Activated CD4-positive, alpha-beta T cell treated with anti-CD3 and anti-CD28 coated beads for 36 hours (primary cell): ENCODE measurements at regions of chr18 and their contacts with region 1.

Region 1: GRCh38 chr18:21997207-21998143 is 171.9 kb upstream of the GATA6 start:
- DNase-seq: no peak
- ATAC-seq: peak; percentile 47
- H3K4me3 Mint-ChIP-seq: no peak overlapping the region
- H3K27ac Mint-ChIP-seq: no peak overlapping the region
- H3K4me1 Mint-ChIP-seq: peaks cover 3% of the 10 kb centered on the region
- H3K27me3 Mint-ChIP-seq: no peaks in the 10 kb centered on the region

Region 2: DNA sequence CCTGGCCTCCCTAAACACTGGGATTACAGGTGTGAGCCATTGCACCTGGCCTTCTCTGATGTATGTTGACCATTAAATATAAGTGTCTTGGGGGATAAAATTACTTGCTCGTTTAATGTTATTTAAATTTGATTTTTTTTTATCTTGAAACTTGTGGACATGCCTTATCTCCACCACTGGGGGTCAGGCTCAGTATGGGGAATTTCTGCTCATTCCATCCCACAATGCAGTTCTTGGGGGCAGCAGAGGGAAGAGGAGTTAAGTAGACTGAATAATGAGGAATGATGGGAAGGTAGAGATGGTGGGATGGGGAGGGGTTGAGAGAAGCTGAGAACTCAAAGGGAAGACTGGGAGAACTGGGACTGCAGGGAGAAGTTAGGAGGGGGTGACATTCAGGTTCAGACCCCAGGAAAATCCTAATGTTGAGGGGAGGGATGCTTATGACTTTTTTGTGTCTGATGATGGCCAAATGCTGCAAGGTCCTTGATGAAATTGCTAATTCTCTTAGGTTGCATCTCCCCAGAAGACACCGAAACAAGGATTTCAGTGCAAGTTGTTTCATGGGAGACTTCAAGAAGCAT is 82.6 kb before region 1 on chr18:
- CTCF ChIA-PET with region 1: no interaction called
- POLR2A ChIA-PET with region 1: no interaction called
- intact Hi-C with region 1: no loop called
- DNase-seq: no peak
- ATAC-seq: no peak
- H3K4me3 Mint-ChIP-seq: no peak overlapping the region
- H3K27ac Mint-ChIP-seq: no peak overlapping the region
- H3K4me1 Mint-ChIP-seq: no peaks in the 10 kb centered on the region
- H3K27me3 Mint-ChIP-seq: peaks cover 11% of the 10 kb centered on the region

Region 3: GRCh38 chr18:21943456-21943855 is 54.0 kb before region 1 on chr18:
- CTCF ChIA-PET with region 1: no interaction called
- POLR2A ChIA-PET with region 1: no interaction called
- intact Hi-C with region 1: loop called in 1 of 2 experiments (anchors 10 kb)
- DNase-seq: no peak
- ATAC-seq: no peak
- H3K4me3 Mint-ChIP-seq: no peak overlapping the region
- H3K27ac Mint-ChIP-seq: no peak overlapping the region
- H3K4me1 Mint-ChIP-seq: no peaks in the 10 kb centered on the region
- H3K27me3 Mint-ChIP-seq: peaks cover 13% of the 10 kb centered on the region

Region 4: GRCh38 chr18:22370414-22370813 is 372.9 kb after region 1 on chr18:
- CTCF ChIA-PET with region 1: no interaction called
- POLR2A ChIA-PET with region 1: no interaction called
- intact Hi-C with region 1: no loop called
- DNase-seq: no peak
- ATAC-seq: no peak
- H3K4me3 Mint-ChIP-seq: no peak overlapping the region
- H3K27ac Mint-ChIP-seq: no peak overlapping the region
- H3K4me1 Mint-ChIP-seq: no peaks in the 10 kb centered on the region
- H3K27me3 Mint-ChIP-seq: peaks cover 5% of the 10 kb centered on the region

Region 5: GRCh38 chr18:22563098-22563707 is 565.7 kb after region 1 on chr18:
- CTCF ChIA-PET with region 1: interaction called, 3 read pairs
- POLR2A ChIA-PET with region 1: interaction called, 4 read pairs
- intact Hi-C with region 1: loop called in 1 of 2 experiments (anchors 10 kb)
- DNase-seq: peak; percentile 9
- ATAC-seq: peak; percentile 55
- H3K4me3 Mint-ChIP-seq: no peak overlapping the region
- H3K27ac Mint-ChIP-seq: no peak overlapping the region
- H3K4me1 Mint-ChIP-seq: peaks cover 5% of the 10 kb centered on the region
- H3K27me3 Mint-ChIP-seq: peaks cover 29% of the 10 kb centered on the region

Region 6: GRCh38 chr18:22609642-22610041 is 612.2 kb after region 1 on chr18:
- CTCF ChIA-PET with region 1: no interaction called
- POLR2A ChIA-PET with region 1: no interaction called
- intact Hi-C with region 1: no loop called
- DNase-seq: no peak
- ATAC-seq: no peak
- H3K4me3 Mint-ChIP-seq: no peak overlapping the region
- H3K27ac Mint-ChIP-seq: no peak overlapping the region
- H3K4me1 Mint-ChIP-seq: no peaks in the 10 kb centered on the region
- H3K27me3 Mint-ChIP-seq: peaks cover 6% of the 10 kb centered on the region

Region 7: DNA sequence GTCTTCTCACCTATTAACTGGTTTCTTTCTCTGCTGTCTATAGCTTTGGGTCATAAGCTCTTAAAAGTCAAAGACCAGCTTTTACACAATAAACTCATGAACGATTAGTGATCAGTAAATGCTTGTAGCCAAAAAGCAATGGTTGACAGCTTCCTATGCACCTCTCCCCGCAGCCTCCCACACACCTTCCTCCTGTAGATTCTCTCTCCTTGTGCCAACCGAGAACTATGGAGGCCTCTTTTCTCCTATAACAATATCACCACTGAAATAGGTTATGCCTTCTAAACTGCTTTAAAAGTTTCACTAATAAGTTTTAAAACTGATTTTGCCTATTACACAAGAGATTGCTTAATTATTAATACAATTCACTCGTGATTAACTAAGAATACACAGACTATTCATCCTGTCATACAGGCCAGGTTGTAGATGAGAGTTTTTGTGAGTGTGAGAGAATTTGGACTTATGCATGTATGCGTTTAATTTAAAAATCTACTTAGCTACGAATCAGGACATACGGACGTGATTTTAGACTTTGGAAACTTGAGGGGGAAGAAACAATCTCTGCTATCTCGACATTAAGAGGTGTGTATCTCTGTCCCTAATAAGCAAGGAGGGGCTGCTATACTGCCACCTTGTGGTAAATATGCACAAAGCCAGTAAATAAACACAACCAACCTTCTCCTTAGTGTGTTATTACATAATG is 706.6 kb after region 1 on chr18:
- CTCF ChIA-PET with region 1: no interaction called
- POLR2A ChIA-PET with region 1: no interaction called
- intact Hi-C with region 1: loop called (anchors 10 kb)
- DNase-seq: peak; percentile 6
- ATAC-seq: no peak
- H3K4me3 Mint-ChIP-seq: no peak overlapping the region
- H3K27ac Mint-ChIP-seq: no peak overlapping the region
- H3K4me1 Mint-ChIP-seq: no peaks in the 10 kb centered on the region
- H3K27me3 Mint-ChIP-seq: peaks cover 8% of the 10 kb centered on the region